CD8-positive, alpha-beta memory T cell (primary cell): ENCODE measurements at regions of chr6 and their contacts with region 1.

Region 1: GRCh38 chr6:41787219-41787917 is at the start of gene TOMM6:
- DNase-seq: peak; percentile 92 to 96 (median 93)
- H3K4me3 ChIP-seq: peak within 1 kb of the TSS; percentile 100
- H3K4me3 Mint-ChIP-seq: peak within 1 kb of the TSS; percentile 94 to 97 (median 96)
- H3K27ac ChIP-seq: peak within 1 kb of the TSS; percentile 97
- H3K27ac Mint-ChIP-seq: peak within 1 kb of the TSS; percentile 94 to 99 (median 98)
- H3K4me1 ChIP-seq: peaks cover 7% of the 10 kb centered on the region
- H3K4me1 Mint-ChIP-seq: peaks cover 9 to 32% (median 21%) of the 10 kb centered on the region in 3 donors
- H3K27me3 ChIP-seq: no peaks in the 10 kb centered on the region
- H3K27me3 Mint-ChIP-seq: no peaks in the 10 kb centered on the region
- total RNA-seq, gene TOMM6: 399 to 414 TPM

Region 2: DNA sequence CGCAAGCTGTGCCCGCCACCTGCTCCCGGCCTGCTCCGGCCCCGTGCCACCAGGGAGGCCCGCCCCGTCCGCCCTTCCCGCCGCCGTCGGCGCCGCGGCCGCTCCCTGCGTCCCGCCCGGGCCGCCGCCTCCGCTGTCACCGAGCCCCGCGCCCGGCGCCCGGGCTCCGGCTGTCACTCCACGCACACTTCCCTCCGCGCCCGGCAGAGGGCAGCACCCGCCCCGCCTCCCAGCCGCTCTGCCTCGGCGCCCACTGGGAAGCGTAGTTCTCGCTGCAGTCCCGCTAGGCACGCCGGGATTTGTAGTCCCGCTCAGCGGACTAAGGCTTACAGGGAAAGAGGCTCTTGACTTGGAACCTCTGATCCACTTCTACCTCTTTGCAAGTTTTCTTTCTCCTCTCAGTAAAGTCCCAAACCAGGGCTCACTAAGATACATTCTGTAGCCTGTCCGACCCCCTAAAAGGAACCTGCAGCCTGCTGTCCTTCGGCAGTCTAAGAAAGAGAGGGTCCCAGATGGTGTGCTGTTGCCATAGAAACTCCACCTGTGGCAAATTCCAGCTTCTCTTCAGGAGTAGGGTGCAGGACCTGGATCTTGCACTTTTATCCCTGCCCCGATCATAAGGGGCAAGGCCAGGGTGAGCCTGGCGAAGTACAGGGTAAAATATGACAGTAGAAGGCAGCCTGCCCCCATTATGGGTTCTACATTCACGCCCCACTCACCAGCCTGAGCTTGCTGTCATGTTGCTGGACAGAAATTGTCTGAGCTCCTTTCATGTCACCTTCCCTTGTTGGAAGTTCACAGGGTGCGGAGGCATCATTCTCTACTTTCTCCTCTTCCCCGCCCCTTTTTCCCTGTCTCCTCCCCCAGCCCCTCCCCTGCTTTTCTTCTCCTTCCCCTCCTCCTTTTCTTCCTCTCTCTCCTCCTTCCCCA is 51.7 kb before region 1 on chr6 and contains the start of gene TFEB:
- CTCF ChIA-PET with region 1: interaction called, 26 read pairs
- POLR2A ChIA-PET with region 1: interaction called, 15 read pairs
- DNase-seq: peak; percentile 89 to 94 (median 91)
- H3K4me3 ChIP-seq: peak within 1 kb of the TSS; percentile 54
- H3K4me3 Mint-ChIP-seq: peak within 1 kb of the TSS; percentile 81 to 94 (median 84)
- H3K27ac ChIP-seq: peak within 1 kb of the TSS; percentile 65
- H3K27ac Mint-ChIP-seq: peak within 1 kb of the TSS; percentile 50 to 96 (median 81)
- H3K4me1 ChIP-seq: peaks cover 38% of the 10 kb centered on the region
- H3K4me1 Mint-ChIP-seq: peaks cover 30 to 36% (median 31%) of the 10 kb centered on the region in 3 donors
- H3K27me3 ChIP-seq: no peaks in the 10 kb centered on the region
- H3K27me3 Mint-ChIP-seq: no peaks in the 10 kb centered on the region
- total RNA-seq, gene TFEB: 12.0 to 12.5 TPM

Region 3: DNA sequence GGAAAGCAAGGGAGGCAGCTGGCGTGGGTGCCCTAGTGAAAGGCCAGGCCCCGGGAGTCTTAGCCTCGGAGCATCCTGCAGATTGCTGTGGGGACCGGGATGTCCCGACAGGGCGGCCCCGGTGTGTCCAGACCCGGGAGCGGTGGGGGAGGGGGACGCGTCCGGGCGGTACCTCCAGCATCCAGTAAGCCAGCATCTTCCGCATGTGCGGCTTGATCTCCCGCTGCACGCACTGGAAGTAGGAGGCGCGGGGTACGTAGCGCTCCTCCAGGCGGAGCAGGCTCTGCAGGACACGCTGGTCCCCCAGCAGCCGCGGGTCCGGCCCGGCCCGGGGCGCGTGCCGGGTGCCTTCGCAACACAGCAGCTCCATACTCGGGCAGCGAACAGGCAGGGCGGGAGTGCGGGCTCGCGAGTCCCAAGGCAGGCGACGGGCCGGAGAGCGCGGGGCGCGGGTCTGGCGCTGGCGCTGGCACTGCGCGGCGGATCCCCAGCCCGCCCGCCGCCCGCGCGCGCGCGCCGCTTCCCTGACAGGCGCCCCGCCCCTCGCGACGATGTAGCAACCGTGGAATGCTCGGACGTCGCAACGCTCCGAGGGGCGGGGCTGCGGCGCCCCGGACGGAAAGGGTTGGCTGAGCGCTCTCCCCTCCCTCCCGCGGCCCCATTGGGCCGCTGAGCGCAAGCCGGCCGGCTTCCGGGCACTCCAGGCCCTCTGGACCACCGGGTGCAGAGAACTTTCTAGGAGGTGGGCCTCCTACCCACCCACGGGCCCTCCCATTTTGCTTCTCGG is 154.1 kb after region 1 on chr6 and contains the start of gene CCND3:
- CTCF ChIA-PET with region 1: interaction called, 51 read pairs
- POLR2A ChIA-PET with region 1: interaction called, 3 read pairs
- DNase-seq: peak; percentile 75 to 88 (median 80)
- H3K4me3 ChIP-seq: peak within 1 kb of the TSS; percentile 84
- H3K4me3 Mint-ChIP-seq: peak within 1 kb of the TSS; percentile 90 to 97 (median 95)
- H3K27ac ChIP-seq: peak within 1 kb of the TSS; percentile 73
- H3K27ac Mint-ChIP-seq: peak within 1 kb of the TSS; percentile 81 to 98 (median 96)
- H3K4me1 ChIP-seq: peaks cover 65% of the 10 kb centered on the region
- H3K4me1 Mint-ChIP-seq: peaks cover 61 to 80% (median 63%) of the 10 kb centered on the region in 3 donors
- H3K27me3 ChIP-seq: no peaks in the 10 kb centered on the region
- H3K27me3 Mint-ChIP-seq: peaks cover 0 to 2% of the 10 kb centered on the region in 2 donors
- total RNA-seq, gene CCND3: 283 to 287 TPM